Gastrocnemius medialis (tissue), 4 donors: ENCODE measurements at regions of chr4 and their contacts with region 1.

Region 1: GRCh38 chr4:149999485-150000074 is 78.7 kb upstream of the DCLK2 start:
- DNase-seq: peak in 1 of 2 donors; percentile 7
- ATAC-seq: no peak
- H3K4me3 ChIP-seq: no peak overlapping the region
- H3K27ac ChIP-seq: no peak overlapping the region
- H3K4me1 ChIP-seq: no peaks in the 10 kb centered on the region
- H3K27me3 ChIP-seq: no peaks in the 10 kb centered on the region
- CTCF ChIP-seq: peak in 3 of 5 experiments; percentile 16 to 52 (median 47)
- POLR2A ChIP-seq: no peak

Region 2: GRCh38 chr4:149113804-149114430 is 885.7 kb before region 1 on chr4:
- in situ Hi-C with region 1: no loop called
- intact Hi-C with region 1: no loop called
- DNase-seq: no peak
- ATAC-seq: no peak
- H3K4me3 ChIP-seq: no peak overlapping the region
- H3K27ac ChIP-seq: no peak overlapping the region
- H3K4me1 ChIP-seq: no peaks in the 10 kb centered on the region
- H3K27me3 ChIP-seq: no peaks in the 10 kb centered on the region
- CTCF ChIP-seq: no peak
- POLR2A ChIP-seq: no peak

Region 3: DNA sequence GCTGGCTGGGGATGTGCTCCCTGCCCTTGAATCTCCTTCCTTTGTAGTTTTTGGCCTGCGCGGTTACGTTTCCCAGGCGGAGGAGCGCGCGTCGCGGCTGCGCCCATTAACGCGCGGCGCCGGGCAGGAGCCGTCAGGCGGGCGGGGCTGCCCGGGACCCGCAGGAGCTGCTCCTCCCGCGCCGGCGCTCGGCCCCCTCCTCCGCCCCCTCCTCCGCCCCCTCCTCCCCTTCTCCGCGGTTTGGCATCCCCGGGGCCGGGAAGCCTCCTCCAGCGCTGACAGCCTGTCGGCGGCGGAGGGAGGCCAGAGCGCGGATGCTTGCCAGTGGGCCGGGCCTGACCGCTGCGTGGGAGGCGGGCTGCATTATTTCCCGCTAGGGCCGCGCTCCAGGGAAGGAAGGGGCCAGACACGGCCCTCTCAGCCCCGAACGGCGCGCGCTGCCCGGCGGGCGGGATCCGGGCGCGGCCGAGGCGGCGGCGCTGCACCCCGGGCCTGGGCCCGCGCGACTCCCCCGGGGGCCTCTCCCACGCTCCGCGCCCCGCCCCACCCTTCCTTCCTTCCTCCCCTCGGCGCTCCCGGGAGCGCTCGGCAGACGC is 78.6 kb after region 1 on chr4 and contains the start of gene DCLK2:
- in situ Hi-C with region 1: no loop called
- intact Hi-C with region 1: no loop called
- DNase-seq: peak; percentile 17 to 28
- ATAC-seq: peak; percentile 68 to 73
- H3K4me3 ChIP-seq: peak within 1 kb of the TSS; percentile 59 to 74 (median 68)
- H3K27ac ChIP-seq: peak within 1 kb of the TSS; percentile 40 to 64 (median 56)
- H3K4me1 ChIP-seq: peaks cover 0 to 4% of the 10 kb centered on the region in 2 donors
- H3K27me3 ChIP-seq: peaks cover 0 to 5% (median 2%) of the 10 kb centered on the region in 3 donors
- CTCF ChIP-seq: no peak
- POLR2A ChIP-seq: no peak
- total RNA-seq, gene DCLK2: 0.29 to 0.97 (median 0.47) TPM

Region 4: DNA sequence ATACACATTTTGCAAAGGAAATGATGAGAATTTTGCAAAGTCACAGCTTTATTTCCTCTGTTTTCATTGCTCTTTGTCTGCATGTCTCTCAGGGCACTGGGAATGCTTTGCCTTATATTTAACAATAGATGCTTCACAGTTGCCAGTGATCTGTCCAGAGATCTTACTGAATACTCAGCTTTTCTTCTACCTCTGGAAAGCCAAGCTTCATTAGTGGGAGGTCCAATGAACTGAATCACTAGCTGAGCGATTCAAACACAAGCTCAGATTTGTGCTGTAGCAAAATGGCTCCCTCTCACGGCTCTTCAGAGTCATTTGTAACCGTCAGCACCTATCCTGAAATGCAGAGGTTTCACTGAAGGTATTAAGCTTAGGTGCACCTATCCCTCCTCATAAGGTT is 217.6 kb after region 1 on chr4:
- in situ Hi-C with region 1: loop called (anchors 10 to 25 kb)
- intact Hi-C with region 1: no loop called
- DNase-seq: no peak
- ATAC-seq: no peak
- H3K4me3 ChIP-seq: no peak overlapping the region
- H3K27ac ChIP-seq: no peak overlapping the region
- H3K4me1 ChIP-seq: no peaks in the 10 kb centered on the region
- H3K27me3 ChIP-seq: no peaks in the 10 kb centered on the region
- CTCF ChIP-seq: no peak
- POLR2A ChIP-seq: no peak